ENCODE measurements at regions of chr4 and their contacts with region 1.

Region 1: GRCh38 chr4:81069706-81070331 is 39.3 kb downstream of the BMP3 start:
- DNase-seq: peak; percentile 23
- H3K4me3 ChIP-seq: no peak overlapping the region
- H3K27ac ChIP-seq: no peak overlapping the region
- H3K4me1 ChIP-seq: no peaks in the 10 kb centered on the region
- H3K27me3 ChIP-seq: peaks cover 16% of the 10 kb centered on the region; the same call in 1 of the 2 replicates
- CTCF ChIP-seq: peak; percentile 94
- EP300 ChIP-seq: no peak
- RAD21 ChIP-seq: peak; percentile 73

Region 2: GRCh38 chr4:81052119-81053068 is 17.4 kb before region 1 on chr4:
- CTCF ChIA-PET with region 1: interaction called, 11 read pairs
- POLR2A ChIA-PET with region 1: no interaction called
- DNase-seq: peak; percentile 20
- H3K4me3 ChIP-seq: no peak overlapping the region; a peak in 1 of 4 replicates
- H3K27ac ChIP-seq: no peak overlapping the region
- H3K4me1 ChIP-seq: no peaks in the 10 kb centered on the region
- H3K27me3 ChIP-seq: no peaks in the 10 kb centered on the region; the same call in 1 of the 2 replicates
- CTCF ChIP-seq: peak; percentile 87
- EP300 ChIP-seq: no peak
- RAD21 ChIP-seq: peak; percentile 70

Region 3: DNA sequence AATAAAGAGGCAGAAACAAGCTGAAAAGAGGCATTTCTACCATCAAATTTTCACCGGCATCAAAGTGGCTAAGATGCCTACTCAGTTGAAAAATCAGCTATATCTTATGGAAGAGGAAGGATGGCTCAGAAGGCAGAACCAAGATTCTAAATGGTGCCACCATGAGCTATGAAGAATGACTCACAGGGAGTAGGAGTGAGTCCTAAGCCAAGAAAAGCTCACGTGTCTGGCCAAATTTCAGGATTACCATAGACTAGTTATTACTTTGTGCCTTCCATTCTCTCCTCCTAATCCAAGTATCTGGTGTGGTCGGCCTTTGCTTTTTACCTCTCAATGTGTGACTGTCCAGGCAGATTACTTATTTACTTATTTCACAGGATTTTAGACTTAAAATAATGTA is 15.5 kb after region 1 on chr4:
- CTCF ChIA-PET with region 1: interaction called, 24 read pairs
- POLR2A ChIA-PET with region 1: no interaction called
- DNase-seq: no peak
- H3K4me3 ChIP-seq: no peak overlapping the region
- H3K27ac ChIP-seq: no peak overlapping the region
- H3K4me1 ChIP-seq: no peaks in the 10 kb centered on the region
- H3K27me3 ChIP-seq: no peaks in the 10 kb centered on the region
- CTCF ChIP-seq: no peak
- EP300 ChIP-seq: no peak
- RAD21 ChIP-seq: no peak

Region 4: DNA sequence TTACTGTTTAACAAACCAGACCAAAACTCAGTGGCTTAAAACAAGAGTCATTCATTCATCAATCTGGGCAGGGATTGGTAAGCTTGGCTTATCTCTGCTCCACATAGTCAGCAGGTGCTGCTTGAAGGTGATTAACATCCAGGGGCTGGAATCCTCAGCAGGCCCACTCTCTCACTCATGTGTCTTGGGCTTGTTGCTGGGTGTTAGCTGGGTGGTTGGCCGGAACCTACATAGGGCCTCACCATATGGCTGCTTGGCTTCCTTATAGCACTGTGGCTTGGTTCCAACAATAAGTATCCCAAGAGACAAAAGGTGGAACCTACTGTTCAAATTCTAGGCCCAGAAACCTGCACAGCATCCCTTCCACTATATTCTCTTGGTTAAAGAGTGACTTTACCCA is 276.9 kb after region 1 on chr4:
- CTCF ChIA-PET with region 1: interaction called, 45 read pairs
- POLR2A ChIA-PET with region 1: no interaction called
- DNase-seq: no peak
- H3K4me3 ChIP-seq: no peak overlapping the region
- H3K27ac ChIP-seq: no peak overlapping the region
- H3K4me1 ChIP-seq: no peaks in the 10 kb centered on the region
- H3K27me3 ChIP-seq: no peaks in the 10 kb centered on the region; the same call in 1 of the 2 replicates
- CTCF ChIP-seq: no peak
- EP300 ChIP-seq: no peak
- RAD21 ChIP-seq: no peak

Region 5: GRCh38 chr4:81351654-81352445 is 282.0 kb after region 1 on chr4:
- CTCF ChIA-PET with region 1: interaction called, 45 read pairs
- POLR2A ChIA-PET with region 1: no interaction called
- DNase-seq: peak; percentile 20
- H3K4me3 ChIP-seq: peak overlapping the region in 1 of 2 experiments; percentile 25; a peak in 1 of 4 replicates
- H3K27ac ChIP-seq: no peak overlapping the region
- H3K4me1 ChIP-seq: no peaks in the 10 kb centered on the region
- H3K27me3 ChIP-seq: no peaks in the 10 kb centered on the region; the same call in 1 of the 2 replicates
- CTCF ChIP-seq: peak; percentile 96
- EP300 ChIP-seq: no peak
- RAD21 ChIP-seq: peak; percentile 69